Naive thymus-derived CD4-positive, alpha-beta T cell (primary cell): ENCODE measurements at regions of chr15 and their contacts with region 1.

Region 1: DNA sequence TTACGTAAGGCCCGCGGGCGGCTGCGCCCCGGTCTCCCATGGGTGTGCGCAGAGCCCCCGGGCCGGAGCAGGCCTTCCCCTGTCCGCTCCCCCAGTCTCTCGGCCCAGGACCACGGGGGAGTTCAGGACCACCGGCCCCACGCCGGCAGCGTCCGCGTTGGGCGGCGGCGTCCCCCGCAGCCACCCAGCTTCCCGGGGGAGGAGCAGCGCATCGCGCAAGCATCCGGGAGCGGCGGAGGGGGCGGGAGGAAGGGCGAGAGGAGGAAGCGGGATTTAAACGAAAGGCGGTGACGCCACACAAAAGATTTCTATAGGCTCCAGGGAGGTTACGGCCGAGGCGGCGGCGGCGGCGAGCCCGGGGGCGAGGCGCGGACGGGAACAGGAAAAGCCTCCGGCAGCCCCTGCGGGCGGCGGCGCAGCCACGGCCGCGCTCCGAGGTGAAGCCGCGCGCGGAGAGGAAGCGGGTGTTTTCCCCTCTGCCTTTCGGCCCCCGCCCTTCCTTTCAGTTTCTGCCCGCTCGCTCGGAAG is at the start of gene TLNRD1:
- DNase-seq: peak; percentile 63 to 90 (median 79)
- ATAC-seq: peak; percentile 81
- H3K4me3 ChIP-seq: peak within 1 kb of the TSS; percentile 83
- H3K4me3 Mint-ChIP-seq: peak within 1 kb of the TSS; percentile 91 to 99 (median 96)
- H3K27ac ChIP-seq: peak within 1 kb of the TSS; percentile 91
- H3K27ac Mint-ChIP-seq: peak within 1 kb of the TSS; percentile 94 to 98 (median 97)
- H3K4me1 ChIP-seq: peaks cover 24 to 36% of the 10 kb centered on the region in 2 donors
- H3K4me1 Mint-ChIP-seq: peaks cover 24 to 66% (median 56%) of the 10 kb centered on the region in 7 donors
- H3K27me3 ChIP-seq: no peaks in the 10 kb centered on the region
- H3K27me3 Mint-ChIP-seq: no peaks in the 10 kb centered on the region
- total RNA-seq, gene TLNRD1: 11.5 to 33.0 (median 22.5) TPM

Region 2: GRCh38 chr15:79923515-79924395 is 1076.9 kb before region 1 on chr15:
- CTCF ChIA-PET with region 1: no interaction called
- POLR2A ChIA-PET with region 1: no interaction called
- intact Hi-C with region 1: loop called in 1 of 2 experiments (anchors 5 kb)
- DNase-seq: peak; percentile 95 to 100 (median 99)
- ATAC-seq: peak; percentile 98
- H3K4me3 ChIP-seq: peak overlapping the region; percentile 98
- H3K4me3 Mint-ChIP-seq: peak overlapping the region; percentile 90 to 98 (median 94)
- H3K27ac ChIP-seq: peak overlapping the region; percentile 96
- H3K27ac Mint-ChIP-seq: peak overlapping the region; percentile 95 to 98 (median 97)
- H3K4me1 ChIP-seq: peaks cover 11 to 14% of the 10 kb centered on the region in 2 donors
- H3K4me1 Mint-ChIP-seq: peaks cover 9 to 30% (median 24%) of the 10 kb centered on the region in 7 donors
- H3K27me3 ChIP-seq: no peaks in the 10 kb centered on the region
- H3K27me3 Mint-ChIP-seq: no peaks in the 10 kb centered on the region

Region 3: GRCh38 chr15:80989518-80990478 is 10.9 kb before region 1 on chr15 and contains the start of gene MESD:
- CTCF ChIA-PET with region 1: interaction called, 5 read pairs
- POLR2A ChIA-PET with region 1: interaction called, 87 read pairs
- intact Hi-C with region 1: loop called (anchors 1 kb)
- DNase-seq: peak; percentile 89 to 97 (median 93)
- ATAC-seq: peak; percentile 99
- H3K4me3 ChIP-seq: peak within 1 kb of the TSS; percentile 95
- H3K4me3 Mint-ChIP-seq: peak within 1 kb of the TSS; percentile 95 to 100 (median 98)
- H3K27ac ChIP-seq: peak within 1 kb of the TSS; percentile 90
- H3K27ac Mint-ChIP-seq: peak within 1 kb of the TSS; percentile 92 to 99 (median 99)
- H3K4me1 ChIP-seq: peaks cover 28 to 45% of the 10 kb centered on the region in 2 donors
- H3K4me1 Mint-ChIP-seq: peaks cover 37 to 68% (median 64%) of the 10 kb centered on the region in 7 donors
- H3K27me3 ChIP-seq: no peaks in the 10 kb centered on the region
- H3K27me3 Mint-ChIP-seq: no peaks in the 10 kb centered on the region
- total RNA-seq, gene MESD: 17.1 to 42.5 (median 38.3) TPM

Region 4: DNA sequence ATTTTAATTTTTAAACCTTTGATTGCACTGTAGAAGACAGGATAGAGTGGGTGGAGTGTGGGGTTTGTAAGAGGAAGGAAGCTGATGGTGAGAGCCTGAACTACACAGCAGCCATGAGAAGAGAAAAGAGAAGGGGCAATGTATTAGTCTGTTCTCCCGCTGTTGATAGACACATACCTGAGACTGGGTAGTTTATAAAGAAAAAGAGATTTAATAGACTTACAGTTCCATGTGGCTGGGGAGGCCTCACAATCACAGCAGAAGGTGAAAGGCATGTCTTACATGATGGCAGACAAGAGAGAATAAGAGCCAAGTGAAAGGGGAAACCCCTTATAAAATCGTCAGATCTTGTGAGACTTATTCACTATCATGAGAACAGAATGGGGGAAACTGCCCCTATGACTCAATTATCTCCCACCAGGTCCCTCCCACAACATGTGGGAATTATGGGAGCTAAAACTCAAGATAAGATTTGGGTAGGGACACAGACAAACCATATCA is 286.0 kb after region 1 on chr15:
- CTCF ChIA-PET with region 1: no interaction called
- POLR2A ChIA-PET with region 1: no interaction called
- intact Hi-C with region 1: loop called in 1 of 2 experiments (anchors 2 kb)
- DNase-seq: peak in 7 of 9 donors; percentile 54 to 73 (median 68)
- ATAC-seq: peak; percentile 95
- H3K4me3 ChIP-seq: peak overlapping the region; percentile 49
- H3K4me3 Mint-ChIP-seq: peak overlapping the region; percentile 70 to 86 (median 80)
- H3K27ac ChIP-seq: peak overlapping the region; percentile 72
- H3K27ac Mint-ChIP-seq: peak overlapping the region; percentile 81 to 99 (median 96)
- H3K4me1 ChIP-seq: peaks cover 57 to 80% of the 10 kb centered on the region in 2 donors
- H3K4me1 Mint-ChIP-seq: peaks cover 52 to 98% (median 88%) of the 10 kb centered on the region in 7 donors
- H3K27me3 ChIP-seq: no peaks in the 10 kb centered on the region
- H3K27me3 Mint-ChIP-seq: no peaks in the 10 kb centered on the region

Region 5: GRCh38 chr15:81323944-81324881 is 323.5 kb after region 1 on chr15 and contains the start of gene STARD5:
- CTCF ChIA-PET with region 1: no interaction called
- POLR2A ChIA-PET with region 1: no interaction called
- intact Hi-C with region 1: loop called in 1 of 2 experiments (anchors 1 kb)
- DNase-seq: peak; percentile 82 to 97 (median 92)
- ATAC-seq: peak; percentile 99
- H3K4me3 ChIP-seq: peak within 1 kb of the TSS; percentile 86
- H3K4me3 Mint-ChIP-seq: peak within 1 kb of the TSS; percentile 90 to 98 (median 94)
- H3K27ac ChIP-seq: peak within 1 kb of the TSS; percentile 78
- H3K27ac Mint-ChIP-seq: peak within 1 kb of the TSS; percentile 87 to 97 (median 92)
- H3K4me1 ChIP-seq: peaks cover 5 to 20% of the 10 kb centered on the region in 2 donors
- H3K4me1 Mint-ChIP-seq: peaks cover 31 to 65% (median 60%) of the 10 kb centered on the region in 7 donors
- H3K27me3 ChIP-seq: no peaks in the 10 kb centered on the region
- H3K27me3 Mint-ChIP-seq: no peaks in the 10 kb centered on the region
- total RNA-seq, gene STARD5: 5.0 to 11.7 (median 10.1) TPM